ENCODE measurements at regions of chr9 and their contacts with region 1.

Region 1: GRCh38 chr9:15873569-15874177 is 320.8 kb downstream of the CCDC171 start:
- DNase-seq: no peak
- H3K4me3 ChIP-seq: no peak overlapping the region
- H3K27ac ChIP-seq: no peak overlapping the region
- H3K4me1 ChIP-seq: peaks cover 0 to 4% (median 0%) of the 10 kb centered on the region in 4 donors
- H3K27me3 ChIP-seq: no peaks in the 10 kb centered on the region
- CTCF ChIP-seq: peak; percentile 45 to 63 (median 56)
- EP300 ChIP-seq: no peak
- POLR2A ChIP-seq: no peak

Region 2: DNA sequence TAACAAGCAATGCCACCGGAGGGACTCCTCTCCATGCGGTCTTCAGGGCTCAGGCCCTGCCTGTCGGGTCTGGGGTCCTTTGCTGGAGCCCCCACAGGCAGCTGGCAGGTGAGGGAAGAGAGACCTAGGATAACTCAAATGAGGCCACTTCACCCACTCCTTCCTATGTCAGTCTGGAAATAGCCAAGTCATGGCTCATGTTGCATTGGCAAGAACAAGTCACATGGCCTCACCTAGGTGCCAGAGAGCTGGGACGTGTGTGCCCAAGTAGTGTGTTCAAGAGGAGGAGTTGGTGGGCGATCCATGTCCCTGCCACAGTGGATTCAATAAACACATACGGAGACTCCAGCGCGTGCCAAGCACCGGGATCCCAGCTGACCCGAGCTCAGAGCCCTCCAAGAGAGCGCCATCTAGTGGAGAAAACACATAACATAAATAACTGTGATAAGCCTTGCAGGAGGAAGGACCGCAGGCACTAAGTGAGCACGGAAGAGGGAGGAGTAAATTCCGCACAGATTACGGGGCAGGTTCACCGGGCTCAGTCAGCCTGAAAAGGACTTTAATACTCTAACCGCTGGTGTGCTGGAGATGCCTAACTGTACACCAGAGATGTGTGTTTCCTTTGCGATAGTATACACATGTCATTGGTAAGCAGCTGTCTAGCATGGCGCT is 260.0 kb after region 1 on chr9:
- intact Hi-C with region 1: loop called (anchors 10 kb)
- DNase-seq: no peak
- H3K4me3 ChIP-seq: no peak overlapping the region
- H3K27ac ChIP-seq: no peak overlapping the region
- H3K4me1 ChIP-seq: no peaks in the 10 kb centered on the region
- H3K27me3 ChIP-seq: no peaks in the 10 kb centered on the region
- CTCF ChIP-seq: peak in 2 of 4 experiments; percentile 18 to 45
- EP300 ChIP-seq: no peak
- POLR2A ChIP-seq: no peak

Region 3: GRCh38 chr9:16653491-16654399 is 780.1 kb after region 1 on chr9:
- intact Hi-C with region 1: loop called (anchors 5 kb)
- DNase-seq: peak; percentile 76
- H3K4me3 ChIP-seq: peak overlapping the region; percentile 5 to 37 (median 34)
- H3K27ac ChIP-seq: peak overlapping the region; percentile 7 to 83 (median 80)
- H3K4me1 ChIP-seq: peaks cover 0 to 76% (median 54%) of the 10 kb centered on the region in 4 donors
- H3K27me3 ChIP-seq: no peaks in the 10 kb centered on the region
- CTCF ChIP-seq: no peak
- EP300 ChIP-seq: no peak
- POLR2A ChIP-seq: no peak